ENCODE measurements at regions of chr19 and their contacts with region 1.

Region 1: GRCh38 chr19:14347999-14348889 is 33.0 kb upstream of the ADGRE5 start:
- DNase-seq: peak; percentile 31 to 85 (median 64)
- ATAC-seq: peak; percentile 82
- H3K4me3 ChIP-seq: peak overlapping the region; percentile 19 to 20
- H3K4me3 Mint-ChIP-seq: peak overlapping the region; percentile 15
- H3K27ac ChIP-seq: no peak overlapping the region
- H3K27ac Mint-ChIP-seq: no peak overlapping the region
- H3K4me1 ChIP-seq: peaks cover 19% of the 10 kb centered on the region
- H3K4me1 Mint-ChIP-seq: peaks cover 13% of the 10 kb centered on the region
- H3K27me3 ChIP-seq: no peaks in the 10 kb centered on the region
- H3K27me3 Mint-ChIP-seq: no peaks in the 10 kb centered on the region
- CTCF ChIP-seq: peak; percentile 92

Region 2: GRCh38 chr19:14198384-14199376 is 149.6 kb before region 1 on chr19:
- CTCF ChIA-PET with region 1: interaction called, 36 read pairs
- POLR2A ChIA-PET with region 1: no interaction called
- intact Hi-C with region 1: loop called (anchors 1 kb)
- DNase-seq: no peak
- ATAC-seq: no peak
- H3K4me3 ChIP-seq: no peak overlapping the region
- H3K4me3 Mint-ChIP-seq: no peak overlapping the region
- H3K27ac ChIP-seq: no peak overlapping the region
- H3K27ac Mint-ChIP-seq: no peak overlapping the region
- H3K4me1 ChIP-seq: no peaks in the 10 kb centered on the region
- H3K4me1 Mint-ChIP-seq: peaks cover 30% of the 10 kb centered on the region
- H3K27me3 ChIP-seq: no peaks in the 10 kb centered on the region
- H3K27me3 Mint-ChIP-seq: no peaks in the 10 kb centered on the region
- CTCF ChIP-seq: no peak

Region 3: DNA sequence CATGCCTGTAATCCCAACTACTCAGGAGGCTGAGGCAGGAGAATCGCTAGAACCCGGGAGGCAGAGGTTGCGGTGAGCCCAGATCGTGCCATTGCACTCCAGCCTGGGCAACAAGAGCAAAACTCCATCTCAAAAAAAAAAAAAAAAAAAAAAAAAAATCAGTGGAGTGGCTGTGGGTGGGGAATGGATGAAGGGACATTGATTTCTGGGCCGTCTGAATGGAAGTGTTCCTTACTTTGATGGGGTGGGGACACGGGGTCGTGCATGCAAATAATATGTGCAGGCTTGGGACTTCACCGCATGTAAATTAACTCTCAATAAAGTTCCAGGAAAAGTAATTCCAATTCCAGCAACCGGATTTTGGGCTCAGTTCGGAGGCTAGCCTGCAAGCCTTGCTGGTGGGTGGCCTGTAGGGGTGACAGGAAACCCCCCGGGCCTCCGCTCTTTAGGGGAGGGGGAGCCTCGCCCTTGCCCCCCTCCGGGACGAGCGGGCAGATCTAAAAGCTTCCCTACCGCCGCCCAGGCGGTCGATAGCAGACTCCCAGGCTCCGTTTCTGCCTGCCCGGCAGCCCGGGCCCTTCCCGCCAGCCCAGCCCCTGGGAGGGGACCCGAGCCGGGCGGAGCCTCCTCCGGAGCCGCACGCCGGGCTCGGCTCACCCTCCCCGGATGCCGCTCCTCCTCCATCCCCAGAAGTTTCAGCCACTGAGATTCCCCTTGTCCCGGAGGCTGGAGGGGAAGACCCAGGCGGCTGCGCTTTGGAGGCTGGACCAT is 15.0 kb before region 1 on chr19:
- CTCF ChIA-PET with region 1: interaction called, 11 read pairs
- POLR2A ChIA-PET with region 1: no interaction called
- intact Hi-C with region 1: no loop called
- DNase-seq: peak in 1 of 9 experiments; percentile 51
- ATAC-seq: peak; percentile 21
- H3K4me3 ChIP-seq: peak overlapping the region; percentile 10 to 39
- H3K4me3 Mint-ChIP-seq: peak overlapping the region; percentile 58
- H3K27ac ChIP-seq: no peak overlapping the region
- H3K27ac Mint-ChIP-seq: no peak overlapping the region
- H3K4me1 ChIP-seq: peaks cover 6% of the 10 kb centered on the region
- H3K4me1 Mint-ChIP-seq: peaks cover 7% of the 10 kb centered on the region
- H3K27me3 ChIP-seq: no peaks in the 10 kb centered on the region
- H3K27me3 Mint-ChIP-seq: no peaks in the 10 kb centered on the region
- CTCF ChIP-seq: no peak

Region 4: GRCh38 chr19:14383661-14384555 is 35.7 kb after region 1 on chr19:
- CTCF ChIA-PET with region 1: interaction called, 19 read pairs
- POLR2A ChIA-PET with region 1: interaction called, 3 read pairs
- intact Hi-C with region 1: no loop called
- DNase-seq: peak in 7 of 9 experiments; percentile 52 to 89 (median 73)
- ATAC-seq: peak; percentile 10
- H3K4me3 ChIP-seq: peak overlapping the region; percentile 69 to 82
- H3K4me3 Mint-ChIP-seq: peak overlapping the region; percentile 90
- H3K27ac ChIP-seq: peak overlapping the region; percentile 75 to 97
- H3K27ac Mint-ChIP-seq: peak overlapping the region; percentile 94
- H3K4me1 ChIP-seq: peaks cover 39% of the 10 kb centered on the region
- H3K4me1 Mint-ChIP-seq: peaks cover 41% of the 10 kb centered on the region
- H3K27me3 ChIP-seq: no peaks in the 10 kb centered on the region
- H3K27me3 Mint-ChIP-seq: no peaks in the 10 kb centered on the region
- CTCF ChIP-seq: no peak

Region 5: GRCh38 chr19:14487370-14488125 is 139.3 kb after region 1 on chr19:
- CTCF ChIA-PET with region 1: interaction called, 4 read pairs
- POLR2A ChIA-PET with region 1: no interaction called
- intact Hi-C with region 1: loop called in 1 of 2 experiments (anchors 5 kb)
- DNase-seq: no peak
- ATAC-seq: no peak
- H3K4me3 ChIP-seq: no peak overlapping the region
- H3K4me3 Mint-ChIP-seq: no peak overlapping the region
- H3K27ac ChIP-seq: no peak overlapping the region
- H3K27ac Mint-ChIP-seq: no peak overlapping the region
- H3K4me1 ChIP-seq: no peaks in the 10 kb centered on the region
- H3K4me1 Mint-ChIP-seq: peaks cover 4% of the 10 kb centered on the region
- H3K27me3 ChIP-seq: no peaks in the 10 kb centered on the region
- H3K27me3 Mint-ChIP-seq: no peaks in the 10 kb centered on the region
- CTCF ChIP-seq: no peak